ENCODE measurements at regions of chr6 and their contacts with region 1.

Region 1: DNA sequence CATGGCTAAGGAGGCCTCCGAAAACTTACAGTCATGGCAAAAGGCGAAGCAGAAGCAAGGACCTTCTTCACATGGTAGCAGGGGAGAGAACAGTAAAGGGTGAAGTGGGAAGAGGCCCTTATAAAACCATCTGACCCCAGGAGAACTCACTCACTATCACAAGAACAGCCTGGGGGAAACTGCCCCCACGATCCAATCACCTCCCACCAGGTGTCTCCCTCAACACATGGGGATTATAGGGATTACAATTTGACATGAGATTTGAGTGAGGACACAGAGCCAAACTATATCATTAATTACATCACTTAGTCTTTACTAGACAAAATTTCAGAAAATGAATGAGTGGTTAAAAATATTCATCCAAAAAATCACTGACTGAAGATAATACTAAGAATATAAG is 453.6 kb downstream of the COL12A1 start:
- DNase-seq: no peak
- ATAC-seq: no peak
- H3K4me3 ChIP-seq: no peak overlapping the region
- H3K4me3 Mint-ChIP-seq: no peak overlapping the region
- H3K27ac ChIP-seq: no peak overlapping the region
- H3K27ac Mint-ChIP-seq: no peak overlapping the region
- H3K4me1 ChIP-seq: no peaks in the 10 kb centered on the region
- H3K4me1 Mint-ChIP-seq: no peaks in the 10 kb centered on the region
- H3K27me3 ChIP-seq: no peaks in the 10 kb centered on the region
- H3K27me3 Mint-ChIP-seq: no peaks in the 10 kb centered on the region
- CTCF ChIP-seq: no peak

Region 2: DNA sequence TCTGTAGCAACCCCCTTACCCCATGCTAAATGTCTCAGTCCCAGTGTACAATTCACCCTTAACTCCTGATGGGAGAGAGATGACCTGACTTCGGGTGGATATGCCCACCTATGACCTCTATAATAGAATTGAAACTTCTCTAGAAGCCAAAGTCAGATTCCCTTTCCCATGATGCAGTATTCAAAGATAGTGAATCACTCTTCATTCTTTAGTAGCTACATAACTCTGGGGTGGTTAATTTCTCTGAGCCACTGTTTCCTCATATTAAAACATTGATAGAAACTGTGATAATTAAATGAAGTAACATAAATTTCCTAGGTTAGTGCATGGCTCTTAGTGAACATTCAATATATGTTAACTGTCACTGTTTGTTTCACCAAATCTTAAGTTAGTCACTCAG is 46.9 kb before region 1 on chr6:
- CTCF ChIA-PET with region 1: no interaction called
- POLR2A ChIA-PET with region 1: no interaction called
- intact Hi-C with region 1: loop called in 1 of 2 experiments (anchors 2 kb)
- DNase-seq: no peak
- ATAC-seq: no peak
- H3K4me3 ChIP-seq: no peak overlapping the region
- H3K4me3 Mint-ChIP-seq: no peak overlapping the region
- H3K27ac ChIP-seq: no peak overlapping the region
- H3K27ac Mint-ChIP-seq: no peak overlapping the region
- H3K4me1 ChIP-seq: no peaks in the 10 kb centered on the region
- H3K4me1 Mint-ChIP-seq: no peaks in the 10 kb centered on the region
- H3K27me3 ChIP-seq: no peaks in the 10 kb centered on the region
- H3K27me3 Mint-ChIP-seq: no peaks in the 10 kb centered on the region
- CTCF ChIP-seq: no peak

Measured in CD8-positive, alpha-beta T cell (primary cell).